ENCODE measurements at regions of chr1 and their contacts with region 1.

Region 1: GRCh38 chr1:54121482-54122134 is 31.2 kb downstream of the CDCP2 start:
- DNase-seq: peak; percentile 86
- ATAC-seq: peak; percentile 93

Region 2: DNA sequence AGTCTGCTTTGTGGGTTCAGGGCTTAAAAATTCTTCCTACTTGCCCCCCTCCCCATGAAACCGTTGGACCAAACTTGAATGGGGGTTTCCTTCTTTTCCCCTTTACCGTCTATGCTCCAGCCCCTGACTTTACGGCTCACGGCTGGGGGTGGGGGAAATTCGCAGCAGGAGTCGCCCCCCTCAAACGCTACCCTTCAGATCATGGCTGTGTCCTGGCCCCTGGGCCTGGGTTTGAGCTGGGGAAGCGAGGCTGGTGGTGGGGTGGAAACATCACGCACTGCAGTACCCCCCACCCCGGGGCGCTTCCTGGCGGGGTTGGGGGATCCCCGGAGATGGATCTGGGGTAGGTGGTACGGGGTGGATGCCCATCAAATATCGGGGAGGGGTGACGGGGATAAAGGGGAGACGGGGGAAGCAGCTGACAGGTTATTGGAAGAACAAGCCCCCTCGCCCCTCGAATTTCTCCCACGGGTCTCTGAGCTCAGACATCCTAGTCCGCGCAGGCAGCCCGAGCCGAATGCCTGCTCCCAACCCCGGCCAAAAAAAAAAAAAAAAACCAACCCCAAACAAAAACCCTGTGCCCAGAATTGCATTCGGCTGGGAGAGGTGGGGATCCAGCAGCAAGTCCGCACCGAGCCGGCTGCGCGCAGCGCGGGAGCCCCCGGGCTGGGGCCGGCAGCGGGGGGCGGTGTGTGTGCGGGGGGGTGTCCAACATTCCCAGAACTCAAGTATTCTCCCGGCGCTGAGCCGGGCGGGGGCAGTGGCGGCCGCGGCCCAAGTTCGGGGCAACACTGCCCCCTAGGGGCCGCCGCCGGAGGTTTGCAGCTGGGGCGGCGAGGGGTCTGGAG is 367.4 kb after region 1 on chr1:
- intact Hi-C with region 1: loop called (anchors 5 kb)
- DNase-seq: peak; percentile 90
- ATAC-seq: peak; percentile 79

Measured in left ventricle myocardium superior (tissue), 1 donor.